K562 (cell line): ENCODE measurements at regions of chr3 and their contacts with region 1.

Region 1: GRCh38 chr3:71006810-71007785 is 576.4 kb downstream of the FOXP1 start:
- DNase-seq: peak; percentile 8 to 20 (median 13)
- ATAC-seq: peak; percentile 61; the same call in 2 of the 3 replicates
- H3K4me3 ChIP-seq: no peak overlapping the region
- H3K27ac ChIP-seq: no peak overlapping the region
- H3K4me1 ChIP-seq: no peaks in the 10 kb centered on the region
- H3K27me3 ChIP-seq: no peaks in the 10 kb centered on the region
- CTCF ChIP-seq: peak in 2 of 3 experiments; percentile 28 to 52; a peak in 3 of 6 replicates
- EP300 ChIP-seq: no peak
- POLR2A ChIP-seq: no peak
- RAD21 ChIP-seq: peak; percentile 70

Region 2: GRCh38 chr3:71050538-71051258 is 43.6 kb after region 1 on chr3:
- CTCF ChIA-PET with region 1: no interaction called
- POLR2A ChIA-PET with region 1: no interaction called
- in situ Hi-C with region 1: no loop called
- intact Hi-C with region 1: no loop called
- DNase-seq: peak in 3 of 4 experiments; percentile 8 to 53 (median 34)
- ATAC-seq: no peak; the same call in 2 of the 3 replicates
- H3K4me3 ChIP-seq: no peak overlapping the region
- H3K27ac ChIP-seq: no peak overlapping the region
- H3K4me1 ChIP-seq: peaks cover 0 to 13% of the 10 kb centered on the region in 2 experiments; a peak in 3 of 5 replicates
- H3K27me3 ChIP-seq: no peaks in the 10 kb centered on the region
- CTCF ChIP-seq: no peak
- EP300 ChIP-seq: no peak
- POLR2A ChIP-seq: no peak
- RAD21 ChIP-seq: no peak

Region 3: DNA sequence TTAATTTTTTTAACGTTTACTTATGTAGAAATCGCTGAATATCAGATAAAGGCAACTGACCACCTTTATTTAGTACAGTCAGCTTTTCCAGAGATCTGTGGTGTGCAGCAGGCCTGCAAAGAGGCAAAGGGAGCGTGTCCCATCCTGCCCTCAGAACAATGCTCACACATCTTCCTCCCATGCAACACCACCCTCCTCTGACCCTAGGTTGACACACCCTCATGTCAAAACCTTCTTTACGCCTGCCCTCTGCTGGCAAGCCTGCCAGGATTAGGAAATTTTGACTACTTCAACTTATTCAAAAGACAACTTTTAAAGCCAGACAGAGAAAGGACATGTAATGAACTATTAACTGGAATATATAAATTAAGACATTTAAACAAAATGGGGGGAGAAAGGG is 62.7 kb after region 1 on chr3:
- CTCF ChIA-PET with region 1: no interaction called
- POLR2A ChIA-PET with region 1: no interaction called
- in situ Hi-C with region 1: no loop called
- intact Hi-C with region 1: loop called (anchors 2 kb)
- DNase-seq: peak; percentile 37 to 64 (median 48)
- ATAC-seq: peak; percentile 69
- H3K4me3 ChIP-seq: no peak overlapping the region
- H3K27ac ChIP-seq: no peak overlapping the region
- H3K4me1 ChIP-seq: peaks cover 6 to 15% of the 10 kb centered on the region in 2 experiments; a peak in 3 of 5 replicates
- H3K27me3 ChIP-seq: no peaks in the 10 kb centered on the region
- CTCF ChIP-seq: peak; percentile 57 to 65 (median 58)
- EP300 ChIP-seq: no peak
- POLR2A ChIP-seq: no peak
- RAD21 ChIP-seq: peak in 1 of 2 experiments; percentile 69; a peak in 3 of 4 replicates